GM12878 (cell line): ENCODE measurements at regions of chr7 and their contacts with region 1.

Region 1: GRCh38 chr7:43582503-43583423 is at the start of gene STK17A:
- DNase-seq: peak; percentile 82
- ATAC-seq: peak; percentile 66
- H3K4me3 ChIP-seq: peak within 1 kb of the TSS; percentile 84
- H3K27ac ChIP-seq: peak within 1 kb of the TSS; percentile 98
- H3K4me1 ChIP-seq: peaks cover 5% of the 10 kb centered on the region
- H3K27me3 ChIP-seq: no peaks in the 10 kb centered on the region
- CTCF ChIP-seq: peak; percentile 99 to 100 (median 100); a peak in 5 of 6 replicates
- EP300 ChIP-seq: no peak
- POLR2A ChIP-seq: peak; percentile 93
- RAD21 ChIP-seq: peak; percentile 100
- polyA plus RNA-seq, gene STK17A: 18.5 to 27.6 TPM

Region 2: DNA sequence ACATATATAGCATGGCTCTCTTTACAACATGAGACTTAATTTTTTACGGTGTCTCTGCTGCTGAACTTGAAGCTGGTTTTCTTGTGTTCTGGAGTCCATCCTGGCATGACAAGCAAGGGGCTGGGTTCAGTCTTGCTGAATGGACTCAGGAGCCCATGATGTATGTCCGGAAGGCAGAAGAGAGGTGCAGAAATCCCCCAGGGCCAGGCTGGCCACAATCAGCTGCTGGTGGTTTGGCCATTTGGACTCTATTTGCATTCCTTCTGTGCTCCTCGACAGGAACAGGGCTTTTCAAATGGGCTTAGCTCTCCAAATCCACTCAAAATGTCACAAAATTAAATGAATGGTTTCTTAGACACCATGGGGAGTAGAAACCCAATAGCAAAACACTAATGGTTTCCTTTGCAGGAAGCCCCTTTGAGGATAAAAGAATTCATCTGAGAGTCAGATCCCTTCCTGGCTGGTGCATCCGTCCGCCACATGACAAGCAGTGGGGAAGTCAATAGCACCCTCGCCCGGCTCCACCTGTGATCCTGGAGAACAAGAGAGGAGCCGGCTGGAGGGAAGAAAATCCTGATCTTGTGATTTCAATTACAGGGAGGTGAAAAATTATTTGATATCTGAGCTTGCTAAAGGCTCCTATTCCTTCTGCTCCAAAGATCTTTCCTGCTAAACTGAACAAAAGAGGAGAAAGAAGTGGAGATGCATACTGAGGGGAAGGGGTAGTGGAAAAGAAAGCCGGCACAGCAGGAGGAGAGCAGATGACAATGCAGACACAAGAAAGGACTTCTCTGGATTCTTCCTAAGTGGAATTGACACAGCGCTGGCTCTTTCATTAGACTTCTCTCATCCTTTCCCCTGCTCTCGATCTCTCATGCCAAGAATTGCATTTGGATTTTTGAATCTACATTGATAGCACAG is 861.6 kb before region 1 on chr7:
- CTCF ChIA-PET with region 1: no interaction called
- POLR2A ChIA-PET with region 1: no interaction called
- RAD21 ChIA-PET with region 1: no interaction called
- SMC1A ChIA-PET with region 1: no interaction called
- in situ Hi-C with region 1: no loop called
- intact Hi-C with region 1: no loop called
- DNase-seq: no peak
- ATAC-seq: no peak
- H3K4me3 ChIP-seq: no peak overlapping the region
- H3K27ac ChIP-seq: no peak overlapping the region
- H3K4me1 ChIP-seq: no peaks in the 10 kb centered on the region
- H3K27me3 ChIP-seq: no peaks in the 10 kb centered on the region
- CTCF ChIP-seq: no peak
- EP300 ChIP-seq: no peak
- POLR2A ChIP-seq: no peak
- RAD21 ChIP-seq: no peak

Region 3: GRCh38 chr7:43454936-43455518 is 127.7 kb before region 1 on chr7:
- CTCF ChIA-PET with region 1: interaction called, 40 read pairs
- POLR2A ChIA-PET with region 1: interaction called, 3 read pairs
- RAD21 ChIA-PET with region 1: interaction called, 22 read pairs
- SMC1A ChIA-PET with region 1: interaction called, 25 read pairs
- in situ Hi-C with region 1: no loop called
- intact Hi-C with region 1: no loop called
- DNase-seq: peak; percentile 13
- ATAC-seq: peak; percentile 92
- H3K4me3 ChIP-seq: no peak overlapping the region
- H3K27ac ChIP-seq: no peak overlapping the region
- H3K4me1 ChIP-seq: no peaks in the 10 kb centered on the region
- H3K27me3 ChIP-seq: no peaks in the 10 kb centered on the region; a peak in 2 of 4 replicates
- CTCF ChIP-seq: peak; percentile 44 to 57 (median 45)
- EP300 ChIP-seq: peak in 1 of 2 experiments; percentile 13; a peak in 1 of 4 replicates
- POLR2A ChIP-seq: no peak
- RAD21 ChIP-seq: peak; percentile 50; the same call in 1 of the 2 replicates

Region 4: DNA sequence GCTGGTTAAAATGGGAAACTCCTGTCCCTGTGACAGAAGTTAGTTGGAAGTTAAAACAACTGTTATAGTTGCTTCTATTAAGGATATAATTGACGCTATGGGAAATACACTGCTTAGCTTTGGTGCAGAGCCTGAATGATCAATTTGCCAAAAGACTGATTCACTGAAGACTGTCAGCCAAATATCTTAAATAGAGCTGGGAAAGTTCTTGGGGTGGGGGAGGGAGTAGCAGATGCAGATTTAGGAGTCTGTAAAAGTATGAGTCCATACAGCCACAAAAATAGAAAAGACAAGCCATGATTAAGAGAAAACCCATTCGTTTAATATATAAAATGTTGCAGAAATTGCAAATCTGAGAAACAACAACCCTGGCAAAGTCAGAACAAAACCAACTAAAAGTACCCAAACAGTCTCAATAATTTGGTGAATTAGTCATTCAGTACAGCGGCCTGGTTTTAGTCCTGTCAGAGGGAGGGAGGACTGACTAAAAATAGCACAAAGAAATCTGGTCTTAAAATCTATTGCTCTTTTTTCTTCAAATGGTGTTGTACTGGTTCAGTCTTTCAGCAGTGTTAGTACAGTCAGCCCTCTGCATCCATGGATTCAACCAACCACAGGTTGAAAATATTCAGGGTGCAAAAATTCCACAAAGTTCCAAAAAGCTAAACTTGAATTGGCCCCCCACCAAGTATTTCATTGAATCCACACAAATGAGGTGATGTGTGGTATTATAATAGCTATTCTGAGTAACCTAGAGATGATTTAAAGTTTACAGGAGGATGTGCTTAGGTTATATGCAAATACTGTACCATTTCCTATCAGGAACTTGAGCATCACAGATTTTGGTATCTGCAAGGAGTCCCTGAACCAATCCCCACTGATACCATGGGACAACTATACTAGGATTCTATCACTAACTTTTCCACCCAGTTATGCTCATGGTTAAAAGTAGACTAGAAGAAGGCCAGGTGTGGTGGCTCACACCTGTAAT is 30.1 kb after region 1 on chr7:
- CTCF ChIA-PET with region 1: interaction called, 34 read pairs
- POLR2A ChIA-PET with region 1: interaction called, 3 read pairs
- RAD21 ChIA-PET with region 1: interaction called, 16 read pairs
- SMC1A ChIA-PET with region 1: interaction called, 5 read pairs
- in situ Hi-C with region 1: no loop called
- intact Hi-C with region 1: loop called (anchors 1 kb)
- DNase-seq: no peak
- ATAC-seq: peak; percentile 78
- H3K4me3 ChIP-seq: no peak overlapping the region
- H3K27ac ChIP-seq: peak overlapping the region; percentile 38; the same call in 1 of the 2 replicates
- H3K4me1 ChIP-seq: peaks cover 11% of the 10 kb centered on the region
- H3K27me3 ChIP-seq: no peaks in the 10 kb centered on the region
- CTCF ChIP-seq: no peak
- EP300 ChIP-seq: no peak
- POLR2A ChIP-seq: no peak
- RAD21 ChIP-seq: no peak

Region 5: GRCh38 chr7:43647673-43648472 is 65.1 kb after region 1 on chr7:
- CTCF ChIA-PET with region 1: interaction called, 183 read pairs
- POLR2A ChIA-PET with region 1: interaction called, 138 read pairs
- RAD21 ChIA-PET with region 1: interaction called, 280 read pairs
- SMC1A ChIA-PET with region 1: interaction called, 163 read pairs
- in situ Hi-C with region 1: no loop called
- intact Hi-C with region 1: loop called (anchors 1 kb)
- DNase-seq: peak; percentile 85
- ATAC-seq: peak; percentile 55
- H3K4me3 ChIP-seq: peak overlapping the region; percentile 58
- H3K27ac ChIP-seq: peak overlapping the region; percentile 99
- H3K4me1 ChIP-seq: peaks cover 68% of the 10 kb centered on the region
- H3K27me3 ChIP-seq: no peaks in the 10 kb centered on the region
- CTCF ChIP-seq: no peak
- EP300 ChIP-seq: peak in 1 of 2 experiments; percentile 40; a peak in 2 of 4 replicates
- POLR2A ChIP-seq: peak; percentile 48
- RAD21 ChIP-seq: no peak

Region 6: DNA sequence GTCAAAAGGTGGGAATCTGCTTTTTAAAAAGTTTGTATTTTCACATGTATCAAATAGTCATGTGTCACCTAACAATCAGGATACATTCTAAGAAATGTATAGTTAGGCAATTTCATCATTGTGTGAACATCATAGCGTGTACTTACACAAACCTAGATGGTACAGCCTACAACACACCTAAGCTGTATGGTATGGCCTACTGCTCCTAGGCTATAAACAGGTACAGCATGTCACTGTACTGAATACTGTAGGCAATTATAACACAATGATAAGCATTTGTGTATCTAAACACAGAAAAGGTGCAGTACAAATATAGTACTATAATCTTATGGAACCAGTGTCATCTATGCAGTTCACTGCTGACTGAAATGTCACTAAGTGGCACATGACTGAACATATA is 128.7 kb after region 1 on chr7:
- CTCF ChIA-PET with region 1: interaction called, 56 read pairs
- POLR2A ChIA-PET with region 1: interaction called, 4 read pairs
- RAD21 ChIA-PET with region 1: interaction called, 12 read pairs
- SMC1A ChIA-PET with region 1: interaction called, 30 read pairs
- in situ Hi-C with region 1: no loop called
- intact Hi-C with region 1: no loop called
- DNase-seq: no peak
- ATAC-seq: peak; percentile 38
- H3K4me3 ChIP-seq: no peak overlapping the region
- H3K27ac ChIP-seq: no peak overlapping the region
- H3K4me1 ChIP-seq: no peaks in the 10 kb centered on the region
- H3K27me3 ChIP-seq: no peaks in the 10 kb centered on the region
- CTCF ChIP-seq: no peak
- EP300 ChIP-seq: no peak
- POLR2A ChIP-seq: no peak
- RAD21 ChIP-seq: no peak

Region 7: GRCh38 chr7:43764039-43764761 is 181.4 kb after region 1 on chr7:
- CTCF ChIA-PET with region 1: interaction called, 15 read pairs
- POLR2A ChIA-PET with region 1: interaction called, 5 read pairs
- RAD21 ChIA-PET with region 1: interaction called, 16 read pairs
- SMC1A ChIA-PET with region 1: interaction called, 8 read pairs
- in situ Hi-C with region 1: no loop called
- intact Hi-C with region 1: no loop called
- DNase-seq: no peak
- ATAC-seq: peak; percentile 86
- H3K4me3 ChIP-seq: peak overlapping the region; percentile 77
- H3K27ac ChIP-seq: peak overlapping the region; percentile 76
- H3K4me1 ChIP-seq: peaks cover 29% of the 10 kb centered on the region
- H3K27me3 ChIP-seq: no peaks in the 10 kb centered on the region
- CTCF ChIP-seq: no peak
- EP300 ChIP-seq: no peak
- POLR2A ChIP-seq: peak; percentile 29; the same call in 1 of the 2 replicates
- RAD21 ChIP-seq: no peak

Region 8: DNA sequence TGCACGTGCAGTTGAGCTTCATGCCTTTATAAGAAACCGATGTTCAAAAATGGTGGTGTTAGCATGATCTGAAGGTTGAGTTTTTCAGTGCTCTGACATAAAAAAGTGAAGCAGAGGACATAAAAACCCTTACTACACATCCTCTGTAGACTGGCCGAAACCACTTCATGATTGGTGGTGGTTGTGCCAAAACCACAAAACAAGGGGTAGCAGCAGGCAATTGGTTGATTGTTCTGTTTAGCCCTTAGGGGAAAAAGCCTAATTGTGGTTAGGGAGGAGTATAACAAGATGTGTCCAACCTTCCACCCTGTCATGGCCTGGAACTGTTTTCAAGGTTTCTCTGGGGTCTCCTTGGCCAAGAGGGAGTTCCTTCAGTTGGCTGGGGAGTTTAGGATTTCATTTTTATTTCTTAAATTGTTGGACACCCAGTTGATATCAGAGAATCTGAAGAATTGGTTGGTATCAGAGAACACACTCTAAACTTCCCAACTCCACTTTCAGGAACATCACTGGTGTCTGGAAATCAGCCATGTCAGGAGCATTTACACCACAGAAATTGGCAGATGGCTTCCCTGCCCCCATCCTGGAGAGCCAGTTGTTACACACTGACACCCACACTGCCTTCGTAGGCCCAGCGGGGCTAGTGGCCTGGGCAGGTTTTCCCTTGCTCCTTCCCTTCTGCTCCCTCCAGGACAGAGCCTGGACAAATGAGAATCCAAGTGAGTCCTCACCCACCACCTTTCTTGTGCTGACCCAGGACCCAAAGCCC is 267.8 kb after region 1 on chr7:
- CTCF ChIA-PET with region 1: interaction called, 15 read pairs
- POLR2A ChIA-PET with region 1: no interaction called
- RAD21 ChIA-PET with region 1: interaction called, 33 read pairs
- SMC1A ChIA-PET with region 1: no interaction called
- in situ Hi-C with region 1: no loop called
- intact Hi-C with region 1: no loop called
- DNase-seq: peak; percentile 45
- ATAC-seq: peak; percentile 96
- H3K4me3 ChIP-seq: no peak overlapping the region
- H3K27ac ChIP-seq: no peak overlapping the region
- H3K4me1 ChIP-seq: peaks cover 10% of the 10 kb centered on the region; the same call in 1 of the 2 replicates
- H3K27me3 ChIP-seq: no peaks in the 10 kb centered on the region
- CTCF ChIP-seq: no peak
- EP300 ChIP-seq: no peak
- POLR2A ChIP-seq: no peak
- RAD21 ChIP-seq: no peak